ENCODE measurements at regions of chr7 and their contacts with region 1.

Region 1: DNA sequence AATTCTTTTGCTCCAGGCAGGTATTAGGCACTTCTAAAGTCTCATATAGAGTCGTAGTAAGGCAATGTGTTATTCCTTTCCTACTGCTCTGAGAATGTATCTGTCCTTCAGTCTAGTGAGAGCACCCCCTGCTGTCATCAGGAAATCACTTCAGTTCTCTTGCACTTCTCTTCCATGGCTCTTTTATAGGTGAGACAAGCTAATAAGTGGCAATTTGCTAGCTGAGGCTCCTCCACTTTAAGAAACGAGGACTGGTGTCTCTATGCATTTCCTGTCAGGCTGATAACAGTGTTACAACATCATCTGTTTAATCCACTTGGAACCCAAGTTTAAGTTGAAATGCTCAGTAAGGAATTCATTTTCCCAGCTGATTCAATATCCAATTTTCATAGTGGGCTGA is 350.6 kb downstream of the TFEC start:
- DNase-seq: no peak
- H3K4me3 ChIP-seq: no peak overlapping the region
- H3K27ac ChIP-seq: no peak overlapping the region
- H3K4me1 ChIP-seq: no peaks in the 10 kb centered on the region
- H3K27me3 ChIP-seq: no peaks in the 10 kb centered on the region
- CTCF ChIP-seq: peak; percentile 52; the same call in 1 of the 2 replicates

Region 2: DNA sequence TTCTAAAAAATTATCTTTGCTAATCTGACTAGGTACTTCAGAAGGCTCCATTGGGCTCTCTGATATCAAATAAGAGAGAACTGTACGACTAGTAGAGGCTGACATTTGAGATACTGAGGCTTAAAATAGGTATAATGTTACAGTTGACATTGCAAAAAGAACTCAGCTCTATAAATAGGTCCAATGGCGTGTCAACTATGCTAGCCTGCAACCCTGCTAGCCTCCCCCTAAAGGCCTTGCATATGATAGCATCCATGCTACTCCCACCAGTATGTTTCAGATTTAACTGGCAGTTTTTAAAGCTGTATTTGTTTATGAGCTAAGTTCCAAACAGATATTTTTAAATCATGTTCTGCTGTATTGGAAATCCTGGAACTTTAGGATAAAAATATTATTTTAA is 1761.0 kb before region 1 on chr7 and contains the start of gene PPP1R3A:
- CTCF ChIA-PET with region 1: no interaction called
- POLR2A ChIA-PET with region 1: no interaction called
- intact Hi-C with region 1: no loop called
- DNase-seq: no peak
- H3K4me3 ChIP-seq: no peak within 1 kb of the TSS
- H3K27ac ChIP-seq: no peak within 1 kb of the TSS
- H3K4me1 ChIP-seq: no peaks in the 10 kb centered on the region
- H3K27me3 ChIP-seq: no peaks in the 10 kb centered on the region
- CTCF ChIP-seq: no peak
- total RNA-seq, gene PPP1R3A: not detected in 2 replicates

Region 3: DNA sequence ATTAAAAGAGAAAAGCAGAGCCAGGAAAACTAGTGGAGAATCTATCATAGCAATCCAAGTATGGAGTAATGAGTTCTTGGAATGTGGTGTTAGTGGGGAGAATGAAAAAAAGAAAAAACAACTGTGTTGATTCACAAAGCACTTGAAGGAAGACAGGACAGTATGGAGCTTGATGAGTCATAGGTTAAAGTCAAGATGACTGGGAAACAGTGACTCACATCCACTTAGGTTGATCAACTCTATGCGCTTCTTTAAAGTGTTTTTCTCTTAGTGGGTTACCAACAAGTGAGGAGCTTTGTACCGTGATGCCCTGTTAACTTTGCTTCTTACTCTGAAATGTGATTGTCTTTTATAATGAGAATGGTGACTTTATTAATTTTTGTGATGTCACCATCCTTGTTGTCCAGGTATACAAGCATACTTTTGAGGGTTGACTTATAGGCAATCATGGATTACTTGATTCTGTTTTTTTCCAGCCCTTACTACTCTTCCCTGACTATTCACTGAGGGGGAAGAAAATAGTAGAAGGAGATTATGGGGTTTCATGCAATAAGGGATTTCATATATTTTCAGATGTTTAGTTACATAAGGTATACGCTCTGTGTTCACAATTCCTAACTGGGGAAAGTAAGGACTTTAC is 790.2 kb before region 1 on chr7:
- CTCF ChIA-PET with region 1: no interaction called
- POLR2A ChIA-PET with region 1: no interaction called
- intact Hi-C with region 1: loop called (anchors 10 kb)
- DNase-seq: peak; percentile 10 to 75
- H3K4me3 ChIP-seq: no peak overlapping the region
- H3K27ac ChIP-seq: no peak overlapping the region
- H3K4me1 ChIP-seq: peaks cover 10% of the 10 kb centered on the region
- H3K27me3 ChIP-seq: no peaks in the 10 kb centered on the region
- CTCF ChIP-seq: no peak

Region 4: DNA sequence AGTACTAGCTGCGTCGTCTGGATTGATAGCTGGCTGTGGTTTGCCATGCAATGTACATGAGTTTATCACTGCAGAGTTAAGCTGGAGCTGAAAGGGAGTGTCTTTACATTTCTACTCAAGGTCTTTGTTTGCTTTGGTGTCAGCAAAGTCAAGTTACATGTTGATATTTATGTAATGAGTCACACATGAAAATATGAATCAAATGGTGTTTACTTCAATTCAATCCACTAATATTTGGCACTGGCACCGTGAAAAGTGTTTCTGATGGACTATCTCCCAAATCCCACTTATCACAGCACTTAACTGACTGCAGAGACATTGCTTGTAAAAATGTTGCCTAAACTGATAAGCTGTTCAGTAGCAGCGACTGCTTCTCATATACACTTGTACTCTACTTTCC is 45.3 kb before region 1 on chr7:
- CTCF ChIA-PET with region 1: interaction called, 12 read pairs
- POLR2A ChIA-PET with region 1: no interaction called
- intact Hi-C with region 1: no loop called
- DNase-seq: peak; percentile 27 to 84
- H3K4me3 ChIP-seq: no peak overlapping the region
- H3K27ac ChIP-seq: no peak overlapping the region
- H3K4me1 ChIP-seq: peaks cover 14% of the 10 kb centered on the region
- H3K27me3 ChIP-seq: no peaks in the 10 kb centered on the region
- CTCF ChIP-seq: no peak